ENCODE measurements at regions of chr19 and their contacts with region 1.

Region 1: DNA sequence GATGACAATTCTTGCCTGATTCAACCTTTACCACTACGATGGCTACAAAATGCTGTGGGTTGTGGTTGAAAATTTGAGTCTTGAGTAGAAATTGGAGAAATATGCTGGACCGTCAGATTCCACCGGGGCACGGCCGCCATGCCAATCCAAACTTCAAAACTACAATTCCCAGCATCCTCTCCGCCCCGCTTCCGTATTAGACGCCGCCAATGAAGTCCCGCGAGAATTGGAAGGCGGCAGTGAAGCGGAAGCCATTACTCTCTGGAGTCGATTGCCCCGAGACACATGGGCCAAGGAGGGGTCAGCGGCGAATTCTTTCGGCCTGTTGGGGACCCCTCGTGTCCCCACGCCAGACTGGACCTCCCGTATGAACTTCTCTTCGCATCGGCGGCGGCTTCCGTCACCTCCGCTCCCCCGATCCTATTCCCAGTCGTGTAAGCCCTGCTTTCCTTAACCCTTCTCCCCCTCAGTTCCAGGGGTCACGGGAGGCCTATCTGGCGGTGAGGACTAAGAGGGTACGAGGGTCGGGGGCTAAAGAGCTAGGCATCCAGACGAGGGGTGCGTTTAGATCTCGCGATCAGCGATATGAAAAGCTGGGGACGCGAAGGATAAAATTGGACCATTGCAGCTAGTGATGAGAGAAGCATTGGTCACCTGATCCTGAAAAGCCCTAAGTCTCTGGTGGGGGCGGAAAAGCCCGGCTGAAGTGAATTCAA is at the start of gene ZNF317:
- DNase-seq: peak; percentile 91
- H3K4me3 ChIP-seq: peak within 1 kb of the TSS; percentile 78 to 95 (median 92)
- H3K27ac ChIP-seq: peak within 1 kb of the TSS; percentile 87
- H3K4me1 ChIP-seq: peaks cover 11% of the 10 kb centered on the region
- H3K27me3 ChIP-seq: no peaks in the 10 kb centered on the region
- CTCF ChIP-seq: no peak
- POLR2A ChIP-seq: peak; percentile 73
- total RNA-seq, gene ZNF317: 29.5 and 30.4 TPM in 2 replicates

Region 2: DNA sequence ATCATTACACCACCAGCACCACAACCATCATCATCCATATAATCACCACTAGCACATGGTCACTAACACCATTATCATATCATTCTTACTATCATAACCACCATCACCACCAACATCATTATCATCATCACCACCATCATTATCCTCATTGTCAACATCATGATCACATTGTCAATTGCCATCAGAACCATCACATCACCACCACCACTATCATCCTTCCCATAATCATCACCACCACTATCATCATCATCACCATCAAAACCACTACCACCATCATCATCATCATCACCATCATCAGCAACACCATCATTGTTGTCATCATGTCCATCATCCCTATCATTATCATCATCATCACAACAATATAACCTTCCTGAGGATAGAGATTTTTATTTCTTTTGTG is 250.1 kb before region 1 on chr19:
- CTCF ChIA-PET with region 1: no interaction called
- POLR2A ChIA-PET with region 1: no interaction called
- dilution Hi-C with region 1: no loop called
- intact Hi-C with region 1: no loop called
- DNase-seq: no peak
- H3K4me3 ChIP-seq: no peak overlapping the region
- H3K27ac ChIP-seq: no peak overlapping the region
- H3K4me1 ChIP-seq: no peaks in the 10 kb centered on the region
- H3K27me3 ChIP-seq: no peaks in the 10 kb centered on the region
- CTCF ChIP-seq: no peak
- POLR2A ChIP-seq: no peak

Region 3: DNA sequence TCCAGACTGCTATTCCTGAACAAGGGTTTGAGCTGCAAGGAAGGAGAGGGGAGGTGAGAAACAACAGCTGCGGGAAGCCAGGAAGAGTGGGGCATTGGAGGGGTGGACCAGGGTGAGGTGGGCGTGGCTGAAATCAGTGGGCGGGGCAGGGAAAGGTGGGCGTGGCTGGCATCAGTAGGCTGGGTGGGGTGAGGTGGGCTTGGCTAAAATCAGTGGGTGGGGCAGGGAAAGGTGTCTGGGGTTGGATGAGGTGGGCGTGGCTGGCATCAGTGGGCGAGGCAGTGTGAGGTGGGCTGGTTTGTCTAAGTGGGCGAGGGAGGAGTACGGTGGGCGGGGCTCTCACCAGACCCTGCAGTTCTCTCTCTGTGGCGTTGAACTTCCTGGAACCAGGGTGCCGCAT is 217.7 kb before region 1 on chr19:
- CTCF ChIA-PET with region 1: no interaction called
- POLR2A ChIA-PET with region 1: no interaction called
- dilution Hi-C with region 1: no loop called
- intact Hi-C with region 1: no loop called
- DNase-seq: no peak
- H3K4me3 ChIP-seq: no peak overlapping the region
- H3K27ac ChIP-seq: no peak overlapping the region
- H3K4me1 ChIP-seq: no peaks in the 10 kb centered on the region
- H3K27me3 ChIP-seq: no peaks in the 10 kb centered on the region
- CTCF ChIP-seq: no peak
- POLR2A ChIP-seq: no peak

Region 4: GRCh38 chr19:9086761-9087160 is 53.6 kb before region 1 on chr19 and contains the start of gene OR1M1:
- CTCF ChIA-PET with region 1: no interaction called
- POLR2A ChIA-PET with region 1: no interaction called
- dilution Hi-C with region 1: no loop called
- intact Hi-C with region 1: no loop called
- DNase-seq: no peak
- H3K4me3 ChIP-seq: no peak within 1 kb of the TSS
- H3K27ac ChIP-seq: no peak within 1 kb of the TSS
- H3K4me1 ChIP-seq: no peaks in the 10 kb centered on the region
- H3K27me3 ChIP-seq: no peaks in the 10 kb centered on the region
- CTCF ChIP-seq: no peak
- POLR2A ChIP-seq: no peak
- total RNA-seq, gene OR1M1: not detected in 2 replicates

Region 5: DNA sequence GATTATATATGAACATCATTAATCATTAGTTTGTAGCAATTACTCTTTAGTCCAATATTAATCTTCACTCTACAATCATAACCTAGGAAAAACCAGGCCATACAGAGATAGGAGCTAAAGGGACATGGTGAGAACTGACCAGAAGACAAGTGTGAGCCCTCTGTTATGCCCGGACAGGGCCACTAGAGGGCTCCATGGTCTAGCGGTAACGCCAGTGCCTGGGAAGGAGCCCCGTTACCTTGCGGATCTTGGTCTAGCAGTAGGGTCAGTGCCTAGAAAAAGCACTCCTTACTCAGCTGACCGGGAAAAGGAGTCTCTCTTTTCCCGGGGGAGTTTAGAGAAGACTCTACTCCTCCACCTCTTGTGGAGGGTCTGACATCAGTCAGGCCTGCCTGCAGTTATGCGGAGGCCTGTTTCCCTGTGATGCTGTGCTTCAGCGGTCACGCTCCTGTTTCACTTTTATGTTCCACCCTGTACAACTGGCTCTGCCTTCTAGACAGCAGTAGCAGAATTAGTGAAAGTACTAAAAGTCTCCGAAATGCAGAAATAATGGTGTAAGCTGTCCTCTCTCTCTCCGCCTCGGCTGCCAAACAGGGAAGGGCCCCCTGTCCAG is 65.3 kb after region 1 on chr19:
- CTCF ChIA-PET with region 1: interaction called, 4 read pairs
- POLR2A ChIA-PET with region 1: no interaction called
- dilution Hi-C with region 1: no loop called
- intact Hi-C with region 1: loop called (anchors 2 kb)
- DNase-seq: peak; percentile 58
- H3K4me3 ChIP-seq: no peak overlapping the region
- H3K27ac ChIP-seq: no peak overlapping the region
- H3K4me1 ChIP-seq: no peaks in the 10 kb centered on the region
- H3K27me3 ChIP-seq: no peaks in the 10 kb centered on the region
- CTCF ChIP-seq: peak; percentile 74 to 87
- POLR2A ChIP-seq: no peak

Region 6: DNA sequence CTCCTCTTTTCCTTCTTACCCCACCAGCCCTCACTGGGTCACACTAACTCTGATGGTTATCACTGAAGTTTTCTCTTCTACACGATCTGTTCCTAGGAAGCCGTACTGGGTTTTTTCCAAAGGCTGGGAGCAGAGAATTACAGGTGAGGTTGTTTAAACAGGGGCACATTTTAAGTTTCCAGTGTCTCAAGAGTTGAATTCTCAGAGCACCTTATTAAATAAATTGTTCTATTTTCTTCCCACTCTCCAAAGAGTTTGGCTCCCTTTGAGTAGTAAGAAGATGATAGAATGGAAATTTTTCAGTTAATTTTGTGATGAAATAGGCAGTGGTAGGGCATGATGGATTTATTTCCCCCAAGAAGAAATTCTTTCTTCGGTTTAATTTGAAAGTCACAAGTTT is 79.2 kb after region 1 on chr19 and contains the start of gene OR7D4:
- CTCF ChIA-PET with region 1: no interaction called
- POLR2A ChIA-PET with region 1: no interaction called
- dilution Hi-C with region 1: no loop called
- intact Hi-C with region 1: no loop called
- DNase-seq: no peak
- H3K4me3 ChIP-seq: no peak within 1 kb of the TSS
- H3K27ac ChIP-seq: no peak within 1 kb of the TSS
- H3K4me1 ChIP-seq: no peaks in the 10 kb centered on the region
- H3K27me3 ChIP-seq: no peaks in the 10 kb centered on the region
- CTCF ChIP-seq: no peak
- POLR2A ChIP-seq: no peak
- total RNA-seq, gene OR7D4: not detected in 2 replicates

Region 7: GRCh38 chr19:9435279-9436268 is 295.3 kb after region 1 on chr19 and contains the start of gene ZNF266:
- CTCF ChIA-PET with region 1: no interaction called
- POLR2A ChIA-PET with region 1: no interaction called
- dilution Hi-C with region 1: no loop called
- intact Hi-C with region 1: loop called (anchors 1 kb)
- DNase-seq: peak; percentile 90
- H3K4me3 ChIP-seq: peak within 1 kb of the TSS; percentile 43 to 90 (median 82)
- H3K27ac ChIP-seq: peak within 1 kb of the TSS; percentile 57
- H3K4me1 ChIP-seq: peaks cover 13% of the 10 kb centered on the region
- H3K27me3 ChIP-seq: no peaks in the 10 kb centered on the region
- CTCF ChIP-seq: peak; percentile 57 to 81
- POLR2A ChIP-seq: no peak
- total RNA-seq, gene ZNF266: 16.7 and 17.0 TPM in 2 replicates

Region 8: DNA sequence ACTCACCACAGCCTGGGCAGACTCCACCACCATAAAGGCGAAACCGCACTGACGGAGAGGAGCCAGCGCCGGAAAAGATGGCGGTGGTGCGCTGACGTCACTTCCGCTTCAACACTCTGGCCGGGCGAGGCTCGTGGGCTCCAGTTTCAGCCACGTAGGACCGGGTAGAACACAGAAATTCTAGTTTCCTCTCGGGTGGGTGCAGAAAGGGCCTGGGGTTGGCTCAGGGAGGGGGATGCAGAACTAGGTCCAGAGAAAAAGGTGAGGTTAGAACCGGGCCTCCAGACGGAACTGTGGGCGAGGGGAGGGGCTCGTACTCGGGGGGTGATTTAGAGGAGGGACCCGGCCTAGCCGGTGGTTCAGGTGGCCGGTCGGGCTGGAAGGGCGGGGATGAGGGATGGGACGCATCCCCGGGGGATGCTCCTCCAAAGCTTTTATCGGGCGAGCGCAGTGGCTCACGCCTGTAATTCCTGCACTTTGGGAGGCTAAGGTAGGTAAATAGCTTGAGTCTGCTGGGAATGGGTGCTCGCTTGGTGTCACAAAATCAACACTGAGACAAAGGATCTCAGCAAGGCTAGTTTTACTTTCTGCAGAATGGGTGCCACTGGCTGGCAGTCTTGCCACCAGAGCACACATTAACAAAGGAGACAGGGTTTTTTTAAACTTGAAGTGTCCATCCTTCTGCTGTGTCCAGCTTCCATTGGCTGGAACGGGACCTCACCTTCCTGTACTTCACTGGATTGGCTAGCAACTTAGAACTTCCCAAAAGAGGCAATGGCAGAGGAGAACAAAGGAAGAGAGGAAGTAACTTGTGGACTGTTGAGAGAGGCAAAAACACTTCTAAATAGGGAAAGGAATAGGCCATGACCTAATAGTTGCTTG is 481.1 kb after region 1 on chr19 and contains the start of gene ZNF561:
- CTCF ChIA-PET with region 1: no interaction called
- POLR2A ChIA-PET with region 1: no interaction called
- dilution Hi-C with region 1: no loop called
- intact Hi-C with region 1: loop called (anchors 1 kb)
- DNase-seq: peak; percentile 90
- H3K4me3 ChIP-seq: peak within 1 kb of the TSS; percentile 27 to 76 (median 57)
- H3K27ac ChIP-seq: peak within 1 kb of the TSS; percentile 93
- H3K4me1 ChIP-seq: peaks cover 10% of the 10 kb centered on the region
- H3K27me3 ChIP-seq: no peaks in the 10 kb centered on the region
- CTCF ChIP-seq: no peak
- POLR2A ChIP-seq: peak; percentile 83
- total RNA-seq, gene ZNF561: 39.4 and 44.9 TPM in 2 replicates

Region 9: GRCh38 chr19:9796113-9796773 is 655.9 kb after region 1 on chr19:
- CTCF ChIA-PET with region 1: no interaction called
- POLR2A ChIA-PET with region 1: no interaction called
- dilution Hi-C with region 1: no loop called
- intact Hi-C with region 1: loop called (anchors 1 kb)
- DNase-seq: peak; percentile 94
- H3K4me3 ChIP-seq: no peak overlapping the region
- H3K27ac ChIP-seq: no peak overlapping the region
- H3K4me1 ChIP-seq: no peaks in the 10 kb centered on the region
- H3K27me3 ChIP-seq: no peaks in the 10 kb centered on the region
- CTCF ChIP-seq: peak; percentile 79 to 83
- POLR2A ChIP-seq: no peak

Region 10: GRCh38 chr19:9914315-9915207 is 774.2 kb after region 1 on chr19:
- CTCF ChIA-PET with region 1: no interaction called
- POLR2A ChIA-PET with region 1: no interaction called
- dilution Hi-C with region 1: no loop called
- intact Hi-C with region 1: loop called (anchors 2 kb)
- DNase-seq: peak; percentile 88
- H3K4me3 ChIP-seq: peak overlapping the region; percentile 38 to 56 (median 56)
- H3K27ac ChIP-seq: peak overlapping the region; percentile 8
- H3K4me1 ChIP-seq: peaks cover 7% of the 10 kb centered on the region
- H3K27me3 ChIP-seq: peaks cover 18 to 25% of the 10 kb centered on the region in 2 experiments
- CTCF ChIP-seq: peak; percentile 65 to 70
- POLR2A ChIP-seq: no peak

Measured in endothelial cell of umbilical vein (primary cell).